GM23248 (cell line): ENCODE measurements at regions of chr2 and their contacts with region 1.

Region 1: GRCh38 chr2:74708883-74709282 is 54.8 kb downstream of the SEMA4F start:
- DNase-seq: peak; percentile 40
- H3K4me3 ChIP-seq: no peak overlapping the region
- H3K27ac ChIP-seq: no peak overlapping the region
- H3K4me1 ChIP-seq: no peaks in the 10 kb centered on the region
- H3K27me3 ChIP-seq: no peaks in the 10 kb centered on the region

Region 2: GRCh38 chr2:74887445-74887951 is 178.6 kb after region 1 on chr2:
- in situ Hi-C with region 1: loop called (anchors 10 kb)
- DNase-seq: peak; percentile 87
- H3K4me3 ChIP-seq: no peak overlapping the region
- H3K27ac ChIP-seq: peak overlapping the region; percentile 93
- H3K4me1 ChIP-seq: peaks cover 30% of the 10 kb centered on the region
- H3K27me3 ChIP-seq: no peaks in the 10 kb centered on the region